Aorta (tissue), 5 donors: ENCODE measurements at regions of chr4 and their contacts with region 1.

Region 1: DNA sequence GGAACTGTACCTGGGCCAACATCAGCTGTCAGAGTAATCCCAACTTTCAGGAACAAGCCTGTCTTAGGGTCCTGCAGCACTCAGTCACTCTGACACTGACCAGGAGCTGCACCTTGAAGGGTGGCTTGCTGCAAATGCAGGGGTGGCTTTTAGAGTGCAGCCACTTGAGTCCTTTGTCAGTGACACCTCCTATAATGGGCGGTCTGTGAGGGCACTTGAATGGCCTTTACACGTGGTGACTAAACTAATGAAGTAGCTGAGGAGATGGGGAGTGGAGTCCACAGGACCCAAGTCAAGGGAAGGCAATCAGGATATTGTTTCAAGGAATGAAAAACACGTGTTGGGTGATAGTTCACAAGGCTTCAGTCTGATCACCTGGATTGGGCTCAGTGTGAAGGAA is 11.1 kb upstream of the LNX1 start:
- DNase-seq: no peak
- ATAC-seq: no peak
- H3K4me3 ChIP-seq: no peak overlapping the region
- H3K27ac ChIP-seq: no peak overlapping the region
- H3K4me1 ChIP-seq: peaks cover 0 to 1% of the 10 kb centered on the region in 2 donors
- H3K27me3 ChIP-seq: no peaks in the 10 kb centered on the region

Region 2: GRCh38 chr4:53644607-53645006 is 42.2 kb after region 1 on chr4:
- intact Hi-C with region 1: loop called in 1 of 2 experiments (anchors 1 kb)
- DNase-seq: no peak
- ATAC-seq: no peak
- H3K4me3 ChIP-seq: no peak overlapping the region
- H3K27ac ChIP-seq: no peak overlapping the region
- H3K4me1 ChIP-seq: no peaks in the 10 kb centered on the region
- H3K27me3 ChIP-seq: no peaks in the 10 kb centered on the region